Heart right ventricle (tissue), 16 donors: ENCODE measurements at regions of chr5 and their contacts with region 1.

Region 1: DNA sequence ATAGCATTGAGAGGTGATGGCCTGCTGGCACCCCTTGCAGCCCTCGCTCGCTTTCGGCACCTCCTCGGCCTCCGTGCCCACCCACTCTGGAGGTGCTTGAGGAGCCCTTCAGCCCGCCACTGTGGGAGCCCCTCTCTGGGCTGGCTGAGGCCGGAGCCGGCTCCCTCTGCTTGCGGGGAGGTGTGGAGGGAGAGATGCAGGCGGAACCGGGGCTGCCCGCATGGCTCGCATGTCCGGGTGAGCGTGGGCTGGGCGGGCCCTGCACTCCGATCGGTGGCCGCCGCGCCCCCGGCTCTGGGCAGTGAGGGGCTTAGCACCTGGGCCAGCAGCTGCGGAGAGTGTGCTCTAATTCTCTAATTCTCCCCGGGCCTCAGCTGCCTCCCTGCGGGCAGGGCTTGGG is 101.1 kb downstream of the KIF4B start:
- DNase-seq: no peak
- ATAC-seq: peak in 1 of 8 donors; percentile 34
- H3K4me3 ChIP-seq: no peak overlapping the region
- H3K27ac ChIP-seq: no peak overlapping the region
- H3K4me1 ChIP-seq: no peaks in the 10 kb centered on the region
- H3K27me3 ChIP-seq: no peaks in the 10 kb centered on the region
- CTCF ChIP-seq: no peak

Region 2: GRCh38 chr5:154157483-154158378 is 956.9 kb before region 1 on chr5:
- intact Hi-C with region 1: no loop called
- DNase-seq: no peak
- ATAC-seq: peak in 5 of 8 donors; percentile 50 to 83 (median 58)
- H3K4me3 ChIP-seq: no peak overlapping the region
- H3K27ac ChIP-seq: no peak overlapping the region
- H3K4me1 ChIP-seq: peaks cover 0 to 21% (median 7%) of the 10 kb centered on the region in 9 donors
- H3K27me3 ChIP-seq: no peaks in the 10 kb centered on the region
- CTCF ChIP-seq: peak in 8 of 9 donors; percentile 15 to 50 (median 40)

Region 3: DNA sequence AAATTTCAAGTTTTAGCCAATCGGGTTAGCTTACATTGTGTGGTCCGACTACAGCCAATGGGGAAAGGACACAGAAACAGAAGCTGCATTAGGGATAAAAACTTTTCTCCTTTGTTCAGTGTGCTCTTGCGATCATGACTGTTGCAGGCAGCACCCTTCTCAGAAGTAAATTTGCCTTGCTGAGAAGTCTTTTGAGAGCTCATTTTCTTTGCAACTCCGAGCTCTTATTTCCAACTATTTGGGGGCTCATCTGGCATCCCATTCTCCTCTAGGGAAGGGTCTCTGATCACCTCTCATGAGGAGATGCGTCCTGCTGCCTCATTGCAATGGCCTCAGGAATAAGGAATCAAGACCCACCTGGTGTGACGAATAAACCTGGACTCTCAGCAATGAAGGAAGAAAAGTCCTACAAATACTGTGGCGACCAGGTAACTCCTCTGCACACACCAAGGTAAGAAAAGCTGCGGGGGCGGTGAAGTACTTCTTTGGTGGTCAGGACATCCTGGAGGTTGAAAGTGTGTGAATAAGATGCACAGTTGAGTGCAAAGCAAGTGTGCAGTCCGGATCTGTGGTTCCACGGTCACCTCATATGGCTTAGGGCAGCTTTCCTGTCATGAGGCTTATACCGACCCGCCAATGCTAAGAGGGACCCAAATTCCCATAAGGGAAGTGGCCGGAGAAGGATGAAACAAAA is 235.9 kb before region 1 on chr5:
- intact Hi-C with region 1: no loop called
- DNase-seq: no peak
- ATAC-seq: no peak
- H3K4me3 ChIP-seq: no peak overlapping the region
- H3K27ac ChIP-seq: peak overlapping the region in 1 of 10 donors; percentile 75
- H3K4me1 ChIP-seq: peaks cover 0 to 20% (median 5%) of the 10 kb centered on the region in 9 donors
- H3K27me3 ChIP-seq: no peaks in the 10 kb centered on the region
- CTCF ChIP-seq: no peak

Region 4: DNA sequence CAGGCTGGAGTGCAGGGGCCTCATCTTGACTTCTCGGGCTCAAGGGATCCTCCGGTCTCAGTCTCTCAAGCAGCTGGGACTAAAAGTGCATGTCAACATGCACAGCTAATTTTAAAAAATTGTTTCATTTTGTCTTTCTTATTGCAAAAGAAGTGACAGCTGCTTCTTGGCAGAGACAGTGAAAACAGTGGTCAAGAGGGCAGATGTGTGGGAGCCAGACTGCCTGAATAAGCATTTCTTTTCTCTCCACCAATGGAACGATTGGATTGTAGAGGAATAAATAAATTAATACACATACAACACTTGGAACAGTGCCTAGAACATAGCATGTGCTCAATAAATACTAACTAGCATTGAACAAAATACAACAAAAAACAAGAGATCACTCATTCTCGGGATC is 128.5 kb before region 1 on chr5:
- intact Hi-C with region 1: loop called in 1 of 10 experiments (anchors 10 kb)
- DNase-seq: no peak
- ATAC-seq: no peak
- H3K4me3 ChIP-seq: no peak overlapping the region
- H3K27ac ChIP-seq: no peak overlapping the region
- H3K4me1 ChIP-seq: no peaks in the 10 kb centered on the region
- H3K27me3 ChIP-seq: peaks cover 0 to 4% (median 0%) of the 10 kb centered on the region in 7 donors
- CTCF ChIP-seq: no peak